ENCODE measurements at regions of chr2 and their contacts with region 1.

Region 1: DNA sequence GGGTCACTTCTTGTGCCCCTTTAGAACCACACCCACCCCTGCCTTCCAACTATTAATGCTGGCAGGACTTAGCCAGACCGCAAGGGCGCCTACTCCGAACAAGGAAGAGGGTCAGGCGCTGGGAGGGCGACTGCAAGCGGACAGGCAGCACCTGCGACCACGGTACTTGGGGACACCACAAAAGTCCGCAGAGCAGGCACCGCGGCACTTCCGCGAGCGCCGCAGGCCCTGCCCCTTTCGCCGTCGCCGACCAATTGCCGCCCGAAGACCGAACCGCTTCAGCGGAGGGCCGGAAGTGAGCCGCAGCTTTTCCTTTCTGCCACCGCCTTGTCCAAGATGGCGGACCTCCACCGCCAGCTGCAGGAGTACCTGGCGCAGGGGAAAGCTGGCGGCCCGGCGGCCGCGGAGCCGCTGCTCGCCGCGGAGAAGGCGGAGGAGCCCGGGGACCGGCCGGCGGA is at the start of gene SFT2D3:
- DNase-seq: peak; percentile 94
- H3K4me3 Mint-ChIP-seq: peak within 1 kb of the TSS; percentile 88
- H3K27ac Mint-ChIP-seq: peak within 1 kb of the TSS; percentile 95
- H3K4me1 Mint-ChIP-seq: peaks cover 38% of the 10 kb centered on the region
- H3K27me3 Mint-ChIP-seq: no peaks in the 10 kb centered on the region
- total RNA-seq, gene SFT2D3: 3.1 to 3.3 TPM

Region 2: DNA sequence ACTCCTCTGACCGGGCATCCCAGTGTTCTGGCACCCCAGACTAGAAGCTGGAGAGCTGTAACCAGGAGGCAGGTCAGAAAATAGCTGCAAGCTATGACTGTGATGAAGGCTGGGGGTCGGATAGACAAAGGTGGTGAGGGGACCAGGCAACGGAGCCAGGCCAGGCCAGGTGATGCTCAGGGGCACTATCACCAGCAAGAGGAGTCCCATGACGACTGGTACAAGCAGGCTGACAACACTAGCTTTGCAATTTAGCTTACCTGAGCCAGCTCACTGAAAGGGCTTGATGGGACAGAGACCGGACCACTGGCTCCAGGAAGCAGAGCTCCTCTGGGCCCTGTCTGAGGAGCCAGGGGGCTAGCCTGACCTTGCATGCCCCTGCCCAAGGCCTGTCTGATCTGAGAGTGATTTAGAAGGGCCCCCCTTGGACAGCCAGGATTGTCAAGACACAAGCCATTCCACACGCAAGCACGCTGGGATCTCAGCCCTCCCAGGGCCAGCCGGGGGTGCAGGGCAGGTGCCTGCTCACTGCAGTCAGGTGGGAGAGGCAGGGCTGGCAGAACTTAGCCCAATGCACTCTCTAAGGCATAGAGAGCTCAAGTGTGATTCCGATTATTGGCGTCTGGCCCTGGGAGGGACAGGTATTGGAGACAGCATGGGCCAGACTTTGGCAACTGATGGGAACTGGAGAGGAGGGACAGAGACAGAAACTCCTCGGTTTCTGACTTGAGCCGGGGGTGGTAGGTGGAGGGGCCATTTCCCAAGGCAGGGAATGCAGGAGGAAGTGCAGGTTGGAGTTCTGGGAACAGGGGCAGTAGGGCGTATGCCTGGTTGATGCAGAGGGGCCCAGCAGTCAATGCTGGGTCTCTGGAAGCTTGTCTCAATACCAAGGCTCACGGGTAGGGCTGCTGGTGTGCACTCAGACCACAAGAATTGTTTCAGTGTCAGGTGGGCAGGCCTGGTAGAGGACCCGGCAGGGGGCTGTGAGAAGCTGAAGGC is 118.1 kb before region 1 on chr2:
- CTCF ChIA-PET with region 1: no interaction called
- intact Hi-C with region 1: no loop called
- DNase-seq: no peak
- H3K4me3 Mint-ChIP-seq: no peak overlapping the region
- H3K27ac Mint-ChIP-seq: no peak overlapping the region
- H3K4me1 Mint-ChIP-seq: no peaks in the 10 kb centered on the region
- H3K27me3 Mint-ChIP-seq: no peaks in the 10 kb centered on the region

Region 3: DNA sequence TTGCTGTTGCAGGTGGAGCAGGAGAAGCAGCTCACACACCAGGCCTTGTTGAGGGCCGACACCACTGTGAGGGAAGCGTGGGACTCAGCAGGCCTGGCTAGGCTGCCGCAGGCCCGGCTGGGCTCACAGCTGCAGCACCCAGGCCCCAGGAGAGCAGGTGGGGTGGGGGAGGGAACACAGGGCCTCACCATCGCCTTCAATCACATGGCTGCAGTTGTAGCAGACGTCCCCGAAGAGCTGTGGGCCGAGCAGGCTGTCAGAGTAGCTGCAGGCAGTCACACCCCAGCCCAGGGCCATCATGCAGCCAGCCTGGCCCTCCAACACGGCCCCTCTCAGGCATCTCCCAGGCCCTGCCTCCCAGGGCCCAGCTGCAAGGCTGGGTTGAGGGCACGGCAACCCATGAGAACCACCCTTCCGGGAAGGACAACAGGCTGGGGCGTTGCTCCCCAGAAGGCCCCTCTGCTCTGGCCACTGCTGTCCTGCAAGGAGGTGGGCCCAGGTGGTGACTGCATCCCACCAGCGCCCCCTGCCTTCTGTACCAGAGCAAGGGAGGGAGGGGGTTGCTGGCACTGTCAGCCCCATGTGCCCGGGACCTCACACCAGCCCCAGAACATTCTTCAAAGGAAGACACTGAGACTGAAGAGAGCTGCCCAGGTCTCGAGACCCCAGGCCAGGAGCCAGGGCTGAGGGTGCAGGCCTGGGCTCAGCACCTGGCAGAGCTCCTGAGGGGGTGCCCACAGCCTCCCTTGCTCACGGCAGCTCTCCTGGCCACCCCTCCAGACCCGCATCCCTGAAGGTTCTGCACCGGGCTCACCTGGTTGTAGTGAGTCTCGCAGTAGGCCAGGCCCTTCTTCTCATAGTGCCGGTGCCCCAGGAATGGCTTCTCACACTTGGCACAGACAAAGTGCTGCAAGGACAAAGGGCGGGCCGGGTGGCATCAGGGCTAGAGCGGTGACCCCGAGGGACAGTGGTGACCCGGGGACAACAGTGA is 60.8 kb before region 1 on chr2:
- CTCF ChIA-PET with region 1: no interaction called
- intact Hi-C with region 1: loop called (anchors 1 kb)
- DNase-seq: peak; percentile 65
- H3K4me3 Mint-ChIP-seq: peak overlapping the region; percentile 65
- H3K27ac Mint-ChIP-seq: peak overlapping the region; percentile 71
- H3K4me1 Mint-ChIP-seq: peaks cover 54% of the 10 kb centered on the region
- H3K27me3 Mint-ChIP-seq: no peaks in the 10 kb centered on the region

Region 4: DNA sequence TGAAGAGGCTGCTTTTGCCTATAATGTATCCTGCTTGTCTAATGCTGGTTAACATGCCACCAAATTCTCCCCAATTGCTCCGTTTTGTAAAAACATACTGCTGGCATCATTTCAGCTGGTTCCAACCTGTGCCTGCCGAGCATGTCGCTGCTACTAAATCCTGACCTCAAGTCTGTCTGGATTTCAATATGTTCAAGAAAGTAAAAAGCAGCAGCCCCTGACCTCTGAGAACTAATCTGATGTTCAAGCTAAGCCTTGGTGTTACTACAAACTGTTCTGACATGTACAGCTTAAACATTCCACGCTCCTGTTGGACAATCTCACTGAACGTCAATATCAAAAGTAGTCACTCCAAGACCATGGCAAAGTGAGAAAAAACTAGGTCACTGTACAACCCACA is 46.4 kb after region 1 on chr2:
- CTCF ChIA-PET with region 1: interaction called, 3 read pairs
- intact Hi-C with region 1: loop called (anchors 2 kb)
- DNase-seq: no peak
- H3K4me3 Mint-ChIP-seq: no peak overlapping the region
- H3K27ac Mint-ChIP-seq: no peak overlapping the region
- H3K4me1 Mint-ChIP-seq: peaks cover 25% of the 10 kb centered on the region
- H3K27me3 Mint-ChIP-seq: no peaks in the 10 kb centered on the region

Region 5: DNA sequence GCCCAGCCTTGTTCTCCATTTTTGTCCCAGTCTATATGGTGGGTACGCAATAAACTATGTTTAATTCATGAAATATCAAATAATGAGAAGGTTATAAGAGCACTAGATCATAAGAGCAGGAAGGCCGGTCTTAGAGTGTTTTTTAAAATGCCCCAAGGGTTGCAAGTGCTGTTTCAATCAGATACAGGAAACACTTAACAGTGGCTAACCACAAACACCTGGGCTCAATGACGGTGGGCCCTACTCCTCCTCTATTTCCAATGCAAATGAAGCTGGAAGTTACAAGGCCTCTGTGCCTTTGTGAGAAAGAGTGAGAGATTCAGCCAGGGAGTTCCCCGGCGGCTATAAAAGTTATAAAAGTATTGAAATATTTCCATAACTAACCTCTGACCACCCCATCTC is 128.6 kb after region 1 on chr2:
- CTCF ChIA-PET with region 1: no interaction called
- intact Hi-C with region 1: loop called (anchors 1 kb)
- DNase-seq: peak; percentile 91
- H3K4me3 Mint-ChIP-seq: no peak overlapping the region
- H3K27ac Mint-ChIP-seq: peak overlapping the region; percentile 78
- H3K4me1 Mint-ChIP-seq: peaks cover 25% of the 10 kb centered on the region
- H3K27me3 Mint-ChIP-seq: no peaks in the 10 kb centered on the region

Region 6: DNA sequence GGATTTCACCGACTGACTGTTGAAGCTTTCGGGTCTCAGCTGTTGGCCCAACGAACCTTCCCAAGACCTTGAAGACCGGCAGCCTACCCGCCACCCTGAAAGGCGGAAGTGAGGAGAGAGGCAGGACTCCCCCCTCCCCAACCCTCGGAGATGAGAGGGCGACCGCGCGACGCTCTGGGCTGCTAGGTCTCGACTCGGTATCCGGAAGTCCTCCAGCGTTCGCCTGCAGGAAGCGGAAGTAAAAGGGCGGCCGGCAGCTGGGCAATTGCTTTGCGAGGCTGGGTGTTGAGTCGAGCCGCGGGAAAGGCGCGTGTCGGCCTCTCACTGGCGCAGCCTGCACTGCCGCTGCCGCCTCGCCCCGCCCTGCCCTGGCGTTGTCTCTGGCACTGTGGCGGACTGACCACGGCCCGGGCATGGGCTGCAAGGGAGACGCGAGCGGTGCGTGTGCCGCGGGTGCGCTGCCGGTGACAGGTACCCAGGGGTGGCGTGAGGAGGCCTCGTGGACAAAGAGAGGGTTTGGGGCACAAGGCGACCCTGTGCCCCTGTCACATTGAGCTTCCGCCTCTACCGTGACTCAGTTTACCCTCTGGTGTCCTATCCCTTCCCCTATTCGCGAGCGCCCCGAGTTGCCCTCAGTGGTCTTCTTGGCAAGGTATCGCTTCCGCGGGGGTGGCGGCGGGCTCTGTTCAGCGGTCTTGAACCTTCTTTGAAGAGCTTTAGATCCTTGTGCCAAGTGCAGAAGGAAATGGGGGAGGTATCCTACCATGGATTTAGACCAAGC is 389.9 kb after region 1 on chr2 and contains the start of gene UGGT1:
- CTCF ChIA-PET with region 1: no interaction called
- intact Hi-C with region 1: loop called (anchors 1 kb)
- DNase-seq: peak; percentile 96
- H3K4me3 Mint-ChIP-seq: peak within 1 kb of the TSS; percentile 90
- H3K27ac Mint-ChIP-seq: peak within 1 kb of the TSS; percentile 86
- H3K4me1 Mint-ChIP-seq: peaks cover 42% of the 10 kb centered on the region
- H3K27me3 Mint-ChIP-seq: no peaks in the 10 kb centered on the region
- total RNA-seq, gene UGGT1: 37.3 to 40.1 TPM